Activated CD4-positive, alpha-beta T cell treated with anti-CD3 and anti-CD28 coated beads, Interleukin-2, amount 10 ng/mL, durations not matched to agents 24 days and 14 days (primary cell): ENCODE measurements at regions of chr11 and their contacts with region 1.

Region 1: DNA sequence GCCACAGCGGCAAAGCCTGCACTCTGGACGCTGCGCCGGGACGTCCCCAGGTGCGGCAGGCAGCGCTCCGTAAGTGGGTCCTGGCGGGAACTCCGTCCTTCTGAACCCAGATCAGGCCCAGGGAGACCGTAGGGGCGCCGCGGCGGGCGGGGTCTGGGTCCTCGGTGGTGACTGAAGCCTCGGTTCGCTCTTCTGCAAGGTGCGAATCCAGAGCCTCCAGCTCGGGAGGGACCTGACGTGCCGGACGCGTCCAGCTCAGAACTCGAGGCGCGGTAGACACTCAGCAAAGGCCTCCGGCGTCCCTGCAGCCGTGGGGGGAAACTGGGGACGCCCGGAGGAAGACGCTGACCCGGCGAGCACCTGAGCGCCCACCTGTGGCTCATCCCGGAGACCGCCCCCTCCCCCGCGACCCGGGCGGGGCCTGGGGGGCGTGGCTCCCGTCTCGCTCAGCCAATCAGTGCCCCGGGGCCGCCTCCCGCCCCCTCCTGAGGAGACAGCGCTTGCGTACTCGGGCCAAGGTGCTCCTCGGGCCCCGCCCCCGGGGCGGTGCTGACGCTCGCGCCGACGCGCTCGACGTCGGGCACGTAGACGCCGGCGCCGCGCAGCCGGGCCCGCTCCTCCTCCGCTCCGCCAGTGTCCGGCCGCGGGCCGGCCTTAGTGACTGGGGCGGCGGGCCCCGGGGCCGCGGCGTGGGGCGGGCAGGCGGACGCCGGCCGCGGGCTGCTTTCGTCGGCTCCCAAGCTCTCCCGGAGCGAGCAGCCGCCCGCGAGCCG is at the start of gene PPFIA1:
- DNase-seq: peak; percentile 99
- H3K4me3 Mint-ChIP-seq: peak within 1 kb of the TSS; percentile 93
- H3K27ac Mint-ChIP-seq: peak within 1 kb of the TSS; percentile 82
- H3K4me1 Mint-ChIP-seq: peaks cover 21% of the 10 kb centered on the region
- H3K27me3 Mint-ChIP-seq: peaks cover 27% of the 10 kb centered on the region
- total RNA-seq, gene PPFIA1: 45.0 and 54.2 TPM in 2 replicates

Region 2: DNA sequence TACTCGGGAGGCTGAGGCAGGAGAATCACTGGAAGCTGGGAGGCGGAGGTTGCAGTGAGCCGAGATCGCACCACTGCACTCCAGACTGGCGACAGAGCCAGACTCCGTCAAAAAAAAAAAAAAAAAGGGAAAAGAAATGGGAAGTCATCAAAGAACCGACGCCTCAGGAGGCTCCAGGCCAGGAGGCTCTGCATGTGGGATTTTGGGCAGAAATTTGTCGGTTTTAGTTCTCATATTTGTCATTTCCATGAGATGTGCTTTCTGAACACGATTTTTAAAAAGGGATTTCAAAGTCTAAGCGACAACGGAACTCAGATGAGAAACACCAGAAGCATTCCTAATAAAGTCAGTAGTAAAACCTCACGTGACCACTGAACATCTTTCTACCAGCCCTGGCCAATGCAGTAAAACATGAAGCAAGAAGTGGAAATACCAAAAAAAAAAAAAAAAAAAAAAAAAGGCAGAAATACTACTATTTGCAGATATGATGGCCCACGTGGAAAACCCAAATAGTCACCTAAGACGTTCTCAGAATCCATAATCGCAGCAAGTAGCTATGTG is 594.4 kb before region 1 on chr11:
- intact Hi-C with region 1: loop called (anchors 1 kb)
- DNase-seq: no peak
- H3K4me3 Mint-ChIP-seq: peak overlapping the region; percentile 96
- H3K27ac Mint-ChIP-seq: peak overlapping the region; percentile 92
- H3K4me1 Mint-ChIP-seq: peaks cover 17% of the 10 kb centered on the region
- H3K27me3 Mint-ChIP-seq: peaks cover 8% of the 10 kb centered on the region

Region 3: GRCh38 chr11:70364745-70365543 is 94.7 kb after region 1 on chr11:
- intact Hi-C with region 1: loop called (anchors 2 kb)
- DNase-seq: peak; percentile 91
- H3K4me3 Mint-ChIP-seq: peak overlapping the region; percentile 79
- H3K27ac Mint-ChIP-seq: peak overlapping the region; percentile 97
- H3K4me1 Mint-ChIP-seq: peaks cover 25% of the 10 kb centered on the region
- H3K27me3 Mint-ChIP-seq: no peaks in the 10 kb centered on the region

Region 4: DNA sequence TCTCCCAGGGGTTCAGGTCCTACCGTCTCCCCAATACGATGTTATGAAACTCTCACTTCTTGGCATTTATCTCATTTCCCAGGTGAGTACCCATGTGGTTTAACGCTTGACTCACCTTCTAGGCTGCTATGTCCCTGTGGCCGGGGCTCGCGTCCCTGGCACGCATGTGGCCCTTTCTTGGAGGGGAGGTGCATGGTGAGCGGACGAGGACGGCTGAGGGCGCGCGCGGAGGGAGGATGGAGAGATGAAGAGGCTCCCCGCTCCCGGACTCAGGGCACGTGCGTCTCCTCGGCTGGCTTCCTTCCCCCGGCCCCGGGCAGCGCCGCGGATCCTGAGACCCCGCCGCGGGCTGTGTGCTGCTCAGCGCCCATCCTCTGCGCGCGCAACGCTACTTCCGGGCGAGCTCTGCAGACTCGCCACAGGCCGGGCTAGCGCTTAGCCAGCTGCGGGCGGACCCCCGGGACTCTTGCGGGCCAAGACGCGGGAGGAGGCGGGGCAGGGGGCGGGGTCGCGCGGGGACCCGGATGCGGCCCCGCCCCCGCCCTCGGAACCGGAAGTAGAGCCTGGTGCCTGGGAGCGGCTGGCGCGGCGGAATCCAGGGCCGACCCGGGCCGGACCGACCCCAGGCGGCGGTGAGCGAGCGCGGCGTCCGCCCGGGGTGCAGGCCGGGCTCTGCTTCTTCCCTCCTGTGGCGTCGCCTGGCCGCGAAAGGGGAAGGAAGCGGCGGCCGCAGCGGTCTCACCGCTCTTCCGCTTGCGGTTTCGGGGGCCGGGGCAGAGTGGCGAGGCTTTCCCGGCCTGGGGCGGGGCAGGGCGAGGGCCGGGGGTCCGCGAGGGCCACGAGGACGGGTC is 127.9 kb after region 1 on chr11 and contains the start of gene CTTN:
- intact Hi-C with region 1: loop called (anchors 1 kb)
- DNase-seq: peak; percentile 88
- H3K4me3 Mint-ChIP-seq: peak within 1 kb of the TSS; percentile 85
- H3K27ac Mint-ChIP-seq: peak within 1 kb of the TSS; percentile 84
- H3K4me1 Mint-ChIP-seq: peaks cover 25% of the 10 kb centered on the region
- H3K27me3 Mint-ChIP-seq: peaks cover 53% of the 10 kb centered on the region
- total RNA-seq, gene CTTN: 56.7 and 57.0 TPM in 2 replicates